ENCODE measurements at regions of chr17 and their contacts with region 1.

Region 1: GRCh38 chr17:50865984-50866774 is at the start of gene TOB1:
- DNase-seq: peak; percentile 92 to 99 (median 97)
- ATAC-seq: peak; percentile 68
- H3K4me3 ChIP-seq: peak within 1 kb of the TSS; percentile 64 to 86
- H3K4me3 Mint-ChIP-seq: peak within 1 kb of the TSS; percentile 100
- H3K27ac ChIP-seq: peak within 1 kb of the TSS; percentile 89 to 97
- H3K27ac Mint-ChIP-seq: peak within 1 kb of the TSS; percentile 99
- H3K4me1 ChIP-seq: peaks cover 40% of the 10 kb centered on the region
- H3K4me1 Mint-ChIP-seq: peaks cover 52% of the 10 kb centered on the region
- H3K27me3 ChIP-seq: no peaks in the 10 kb centered on the region
- H3K27me3 Mint-ChIP-seq: no peaks in the 10 kb centered on the region
- CTCF ChIP-seq: no peak
- total RNA-seq, gene TOB1: 252 to 277 TPM

Region 2: DNA sequence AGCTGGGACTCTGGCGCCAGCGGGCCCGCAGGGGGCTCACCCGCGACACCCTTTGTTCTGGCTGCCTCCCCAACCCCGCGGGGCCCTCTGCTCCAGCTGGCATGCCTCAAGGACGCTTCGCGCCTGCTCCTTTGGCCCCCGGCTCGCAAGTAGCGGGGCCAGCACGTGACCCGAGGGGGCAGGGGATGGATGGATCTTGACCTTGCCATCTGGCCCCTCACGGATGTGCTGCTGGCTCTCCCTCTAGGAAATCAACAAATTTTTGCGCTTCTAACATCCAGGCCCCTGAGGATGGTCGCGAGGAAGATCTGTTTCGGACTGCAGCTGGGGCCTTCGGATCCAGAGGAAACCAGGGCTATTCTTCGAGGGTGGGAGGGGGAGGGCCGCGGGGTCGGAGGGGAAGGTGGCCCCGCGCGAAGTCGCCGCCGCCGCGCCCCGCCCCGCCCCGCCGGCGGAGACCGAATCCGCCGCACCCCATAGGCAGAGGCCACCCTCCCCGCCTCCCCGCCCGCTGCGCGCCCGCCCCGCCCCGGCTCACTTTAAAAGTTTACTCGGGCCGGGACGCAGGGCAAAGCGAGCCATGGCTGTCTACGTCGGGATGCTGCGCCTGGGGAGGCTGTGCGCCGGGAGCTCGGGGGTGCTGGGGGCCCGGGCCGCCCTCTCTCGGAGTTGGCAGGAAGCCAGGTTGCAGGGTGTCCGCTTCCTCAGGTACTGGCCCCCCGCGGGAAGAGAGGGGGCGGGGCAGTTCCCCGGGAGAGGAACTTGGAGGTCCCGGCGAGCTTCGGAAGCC is 440.3 kb before region 1 on chr17 and contains the start of gene ACSF2:
- CTCF ChIA-PET with region 1: no interaction called
- POLR2A ChIA-PET with region 1: no interaction called
- intact Hi-C with region 1: loop called in 1 of 2 experiments (anchors 5 kb)
- DNase-seq: peak; percentile 39 to 79 (median 67)
- ATAC-seq: peak; percentile 85
- H3K4me3 ChIP-seq: peak within 1 kb of the TSS; percentile 76 to 77
- H3K4me3 Mint-ChIP-seq: peak within 1 kb of the TSS; percentile 87
- H3K27ac ChIP-seq: peak within 1 kb of the TSS; percentile 21 to 75
- H3K27ac Mint-ChIP-seq: peak within 1 kb of the TSS; percentile 79
- H3K4me1 ChIP-seq: peaks cover 28% of the 10 kb centered on the region
- H3K4me1 Mint-ChIP-seq: peaks cover 35% of the 10 kb centered on the region
- H3K27me3 ChIP-seq: no peaks in the 10 kb centered on the region
- H3K27me3 Mint-ChIP-seq: no peaks in the 10 kb centered on the region
- CTCF ChIP-seq: no peak
- total RNA-seq, gene ACSF2: 12.5 to 12.9 TPM

Region 3: DNA sequence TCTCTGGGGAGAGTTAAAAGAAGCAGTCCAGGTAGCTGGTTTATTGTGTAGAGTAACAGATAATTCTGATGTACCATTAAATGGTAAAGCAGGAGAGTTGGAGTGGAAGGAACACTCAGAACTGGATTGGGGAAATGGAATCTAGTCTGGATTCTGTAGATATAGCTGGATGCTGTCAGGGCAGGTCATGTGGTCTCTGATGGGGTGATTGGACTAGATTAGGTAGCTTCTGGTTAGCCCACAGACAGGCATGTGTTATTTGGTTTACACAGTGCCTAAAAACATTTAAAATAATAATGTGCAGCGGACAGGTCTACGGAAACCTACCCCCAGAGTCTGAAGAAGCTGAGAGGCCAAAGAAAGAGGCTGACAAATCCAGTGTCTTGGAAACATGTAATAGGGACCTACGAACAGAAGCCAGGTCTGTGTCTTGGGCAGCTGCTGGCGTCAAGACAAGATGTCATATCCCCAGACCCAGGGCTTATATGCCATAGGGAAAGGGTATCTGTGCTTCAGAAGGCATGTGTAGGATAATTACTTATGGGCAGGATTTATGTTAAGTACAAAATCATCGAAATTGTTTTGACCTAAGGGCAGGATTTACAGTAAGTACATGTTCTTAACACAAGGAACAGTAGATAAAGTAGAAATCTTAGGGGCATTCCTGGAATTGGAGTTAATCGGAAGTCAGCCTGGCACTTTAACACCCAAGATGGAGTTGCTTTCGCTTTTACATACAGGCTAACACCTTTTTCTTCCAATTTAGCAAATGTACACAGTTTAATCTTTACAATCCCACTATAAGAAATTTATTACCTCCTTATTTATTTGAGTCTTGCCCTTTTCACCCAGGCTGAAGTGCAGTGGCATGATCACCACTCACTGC is 134.4 kb before region 1 on chr17:
- CTCF ChIA-PET with region 1: no interaction called
- POLR2A ChIA-PET with region 1: no interaction called
- intact Hi-C with region 1: no loop called
- DNase-seq: peak in 1 of 9 experiments; percentile 55
- ATAC-seq: no peak
- H3K4me3 ChIP-seq: no peak overlapping the region
- H3K4me3 Mint-ChIP-seq: peak overlapping the region; percentile 2
- H3K27ac ChIP-seq: peak overlapping the region in 1 of 2 experiments; percentile 65
- H3K27ac Mint-ChIP-seq: peak overlapping the region; percentile 3
- H3K4me1 ChIP-seq: peaks cover 35% of the 10 kb centered on the region
- H3K4me1 Mint-ChIP-seq: peaks cover 77% of the 10 kb centered on the region
- H3K27me3 ChIP-seq: no peaks in the 10 kb centered on the region
- H3K27me3 Mint-ChIP-seq: no peaks in the 10 kb centered on the region
- CTCF ChIP-seq: no peak

Region 4: DNA sequence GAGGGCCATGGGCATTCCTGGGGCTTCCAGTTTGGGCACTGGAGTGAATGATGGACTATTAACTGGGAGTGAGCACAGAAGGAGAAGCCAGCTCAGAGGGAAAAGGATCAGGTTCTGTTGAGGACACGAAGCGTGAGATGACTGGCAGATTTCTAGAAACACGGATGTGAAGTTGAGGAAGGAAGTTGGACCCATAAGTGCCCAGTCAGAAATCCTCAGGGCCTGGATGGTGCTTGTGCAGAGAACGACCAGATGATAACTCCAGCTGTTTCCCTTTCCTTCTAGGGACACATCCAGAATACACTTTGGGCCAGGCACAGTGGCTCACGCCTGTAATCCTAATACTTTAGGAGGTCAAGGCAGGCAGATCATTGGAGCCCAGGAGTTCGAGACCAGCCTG is 75.6 kb before region 1 on chr17:
- CTCF ChIA-PET with region 1: no interaction called
- POLR2A ChIA-PET with region 1: no interaction called
- intact Hi-C with region 1: no loop called
- DNase-seq: no peak
- ATAC-seq: no peak
- H3K4me3 ChIP-seq: no peak overlapping the region
- H3K4me3 Mint-ChIP-seq: no peak overlapping the region
- H3K27ac ChIP-seq: no peak overlapping the region
- H3K27ac Mint-ChIP-seq: no peak overlapping the region
- H3K4me1 ChIP-seq: no peaks in the 10 kb centered on the region
- H3K4me1 Mint-ChIP-seq: no peaks in the 10 kb centered on the region
- H3K27me3 ChIP-seq: no peaks in the 10 kb centered on the region
- H3K27me3 Mint-ChIP-seq: peaks cover 8% of the 10 kb centered on the region
- CTCF ChIP-seq: no peak

Region 5: GRCh38 chr17:50828508-50829170 is 37.5 kb before region 1 on chr17:
- CTCF ChIA-PET with region 1: no interaction called
- POLR2A ChIA-PET with region 1: no interaction called
- intact Hi-C with region 1: no loop called
- DNase-seq: no peak
- ATAC-seq: no peak
- H3K4me3 ChIP-seq: no peak overlapping the region
- H3K4me3 Mint-ChIP-seq: no peak overlapping the region
- H3K27ac ChIP-seq: no peak overlapping the region
- H3K27ac Mint-ChIP-seq: no peak overlapping the region
- H3K4me1 ChIP-seq: no peaks in the 10 kb centered on the region
- H3K4me1 Mint-ChIP-seq: no peaks in the 10 kb centered on the region
- H3K27me3 ChIP-seq: no peaks in the 10 kb centered on the region
- H3K27me3 Mint-ChIP-seq: peaks cover 7% of the 10 kb centered on the region
- CTCF ChIP-seq: no peak

Region 6: GRCh38 chr17:50883850-50884438 is 17.8 kb after region 1 on chr17:
- CTCF ChIA-PET with region 1: interaction called, 7 read pairs
- POLR2A ChIA-PET with region 1: interaction called, 34 read pairs
- intact Hi-C with region 1: no loop called
- DNase-seq: peak in 1 of 9 experiments; percentile 41
- ATAC-seq: no peak
- H3K4me3 ChIP-seq: no peak overlapping the region
- H3K4me3 Mint-ChIP-seq: no peak overlapping the region
- H3K27ac ChIP-seq: no peak overlapping the region
- H3K27ac Mint-ChIP-seq: no peak overlapping the region
- H3K4me1 ChIP-seq: peaks cover 22% of the 10 kb centered on the region
- H3K4me1 Mint-ChIP-seq: peaks cover 26% of the 10 kb centered on the region
- H3K27me3 ChIP-seq: no peaks in the 10 kb centered on the region
- H3K27me3 Mint-ChIP-seq: no peaks in the 10 kb centered on the region
- CTCF ChIP-seq: no peak

Region 7: GRCh38 chr17:50919321-50920085 is 53.3 kb after region 1 on chr17:
- CTCF ChIA-PET with region 1: interaction called, 11 read pairs
- POLR2A ChIA-PET with region 1: interaction called, 196 read pairs
- intact Hi-C with region 1: loop called (anchors 1 kb)
- DNase-seq: peak; percentile 69 to 96 (median 86)
- ATAC-seq: peak; percentile 83
- H3K4me3 ChIP-seq: peak overlapping the region in 1 of 2 experiments; percentile 17
- H3K4me3 Mint-ChIP-seq: peak overlapping the region; percentile 69
- H3K27ac ChIP-seq: peak overlapping the region; percentile 86 to 89
- H3K27ac Mint-ChIP-seq: peak overlapping the region; percentile 94
- H3K4me1 ChIP-seq: peaks cover 50% of the 10 kb centered on the region
- H3K4me1 Mint-ChIP-seq: peaks cover 40% of the 10 kb centered on the region
- H3K27me3 ChIP-seq: no peaks in the 10 kb centered on the region
- H3K27me3 Mint-ChIP-seq: no peaks in the 10 kb centered on the region
- CTCF ChIP-seq: no peak

Region 8: GRCh38 chr17:50949989-50950881 is 84.1 kb after region 1 on chr17:
- CTCF ChIA-PET with region 1: interaction called, 761 read pairs
- POLR2A ChIA-PET with region 1: interaction called, 102 read pairs
- intact Hi-C with region 1: loop called (anchors 1 to 2 kb)
- DNase-seq: peak; percentile 32 to 80 (median 60)
- ATAC-seq: peak; percentile 87
- H3K4me3 ChIP-seq: no peak overlapping the region
- H3K4me3 Mint-ChIP-seq: no peak overlapping the region
- H3K27ac ChIP-seq: no peak overlapping the region
- H3K27ac Mint-ChIP-seq: no peak overlapping the region
- H3K4me1 ChIP-seq: peaks cover 12% of the 10 kb centered on the region
- H3K4me1 Mint-ChIP-seq: peaks cover 22% of the 10 kb centered on the region
- H3K27me3 ChIP-seq: no peaks in the 10 kb centered on the region
- H3K27me3 Mint-ChIP-seq: no peaks in the 10 kb centered on the region
- CTCF ChIP-seq: peak; percentile 49

Region 9: GRCh38 chr17:50989149-50989548 is 123.0 kb after region 1 on chr17:
- CTCF ChIA-PET with region 1: no interaction called
- POLR2A ChIA-PET with region 1: no interaction called
- intact Hi-C with region 1: no loop called
- DNase-seq: no peak
- ATAC-seq: no peak
- H3K4me3 ChIP-seq: no peak overlapping the region
- H3K4me3 Mint-ChIP-seq: no peak overlapping the region
- H3K27ac ChIP-seq: no peak overlapping the region
- H3K27ac Mint-ChIP-seq: no peak overlapping the region
- H3K4me1 ChIP-seq: no peaks in the 10 kb centered on the region
- H3K4me1 Mint-ChIP-seq: no peaks in the 10 kb centered on the region
- H3K27me3 ChIP-seq: no peaks in the 10 kb centered on the region
- H3K27me3 Mint-ChIP-seq: no peaks in the 10 kb centered on the region
- CTCF ChIP-seq: no peak

Region 10: DNA sequence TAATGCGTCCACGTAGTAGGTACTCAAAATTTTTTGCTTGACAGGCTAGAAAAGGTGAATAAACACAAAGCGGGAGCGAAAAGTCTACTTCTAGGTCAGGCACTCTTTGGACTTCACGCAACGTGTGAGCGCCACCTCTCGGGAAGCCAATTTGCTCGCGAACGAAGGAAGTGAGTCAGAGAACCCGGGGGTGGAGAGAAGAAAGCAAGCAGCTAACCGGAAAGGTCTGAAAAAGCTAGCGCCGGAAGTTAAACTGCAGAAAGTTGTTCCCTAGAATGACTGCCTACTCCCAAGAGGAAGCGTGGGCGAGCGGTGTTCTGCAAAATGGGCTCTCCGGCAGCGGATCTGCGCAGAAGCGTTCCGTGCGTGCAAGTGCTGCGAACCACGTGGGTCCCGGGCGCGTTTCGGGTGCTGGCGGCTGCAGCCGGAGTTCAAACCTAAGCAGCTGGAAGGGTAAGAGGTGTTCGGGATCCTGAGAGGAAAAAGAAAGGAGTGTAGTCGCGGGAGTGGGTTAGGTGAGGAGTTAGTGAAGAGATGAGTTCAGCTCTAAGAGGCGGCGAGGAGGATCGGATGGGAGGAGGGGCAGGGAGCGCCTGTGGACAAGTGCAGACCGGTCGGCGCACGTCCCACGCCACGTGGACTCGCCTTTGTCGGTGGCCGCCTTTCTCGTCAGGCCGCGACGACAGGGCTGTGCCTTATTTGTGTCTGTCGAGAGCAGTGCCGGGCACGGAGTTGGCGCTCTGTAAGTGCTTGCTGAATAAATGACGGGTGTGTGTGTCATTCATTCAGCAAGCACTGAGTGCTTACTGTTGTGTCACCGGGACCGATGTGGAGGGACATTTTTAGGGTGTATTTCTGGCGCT is 287.3 kb after region 1 on chr17 and contains the start of gene NME1:
- CTCF ChIA-PET with region 1: interaction called, 5 read pairs
- POLR2A ChIA-PET with region 1: interaction called, 11 read pairs
- intact Hi-C with region 1: loop called (anchors 1 kb)
- DNase-seq: peak; percentile 94 to 99 (median 96)
- ATAC-seq: peak; percentile 92
- H3K4me3 ChIP-seq: peak within 1 kb of the TSS; percentile 70 to 75
- H3K4me3 Mint-ChIP-seq: no peak within 1 kb of the TSS
- H3K27ac ChIP-seq: peak within 1 kb of the TSS; percentile 58 to 77
- H3K27ac Mint-ChIP-seq: no peak within 1 kb of the TSS
- H3K4me1 ChIP-seq: peaks cover 22% of the 10 kb centered on the region
- H3K4me1 Mint-ChIP-seq: peaks cover 11% of the 10 kb centered on the region
- H3K27me3 ChIP-seq: no peaks in the 10 kb centered on the region
- H3K27me3 Mint-ChIP-seq: no peaks in the 10 kb centered on the region
- CTCF ChIP-seq: peak; percentile 67
- total RNA-seq, gene NME1: 11.3 to 12.1 TPM